Posterior vena cava (tissue), 2 donors: ENCODE measurements at regions of chr10 and their contacts with region 1.

Region 1: GRCh38 chr10:96089670-96090462 is 40.2 kb upstream of the ZNF518A start:
- DNase-seq: peak; percentile 98

Region 2: DNA sequence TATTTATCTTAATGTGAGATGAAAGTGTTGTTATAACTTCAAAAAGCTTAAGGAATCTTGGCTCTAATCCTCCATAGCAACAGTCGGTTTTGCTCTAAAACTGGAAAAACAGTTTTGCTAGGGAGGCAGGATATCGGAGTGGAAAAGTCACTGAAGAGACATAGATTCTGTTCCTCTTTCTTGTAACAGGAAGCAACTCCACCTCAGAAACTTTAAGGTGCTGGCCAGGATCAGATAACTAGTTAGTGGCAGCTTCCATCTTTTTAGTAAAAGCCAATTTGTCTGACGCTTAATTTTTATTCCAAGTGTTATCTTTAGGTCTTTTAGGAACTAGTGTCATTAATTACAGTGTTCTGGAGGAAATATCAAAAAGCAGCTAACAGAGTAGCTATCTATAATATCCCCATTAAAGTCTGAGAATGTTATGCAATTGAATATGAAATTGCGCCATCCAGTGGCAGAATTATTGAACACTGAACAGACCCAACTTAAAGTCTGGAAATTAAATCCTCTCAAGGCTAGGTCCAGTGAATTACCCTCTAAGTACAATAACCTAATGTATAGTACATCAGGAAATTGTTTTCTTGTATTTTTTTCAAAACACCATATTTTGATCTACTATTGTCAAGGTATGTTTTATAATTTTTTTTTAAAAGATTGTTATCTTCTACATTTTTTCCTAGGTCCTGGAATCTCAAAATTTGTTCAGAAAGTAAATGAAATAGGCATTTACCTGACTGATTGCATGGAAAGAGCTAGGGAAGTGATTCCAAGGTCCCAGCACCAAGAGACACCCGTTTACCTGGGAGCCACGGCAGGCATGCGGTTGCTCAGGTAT is 248.0 kb before region 1 on chr10:
- intact Hi-C with region 1: loop called in 1 of 2 experiments (anchors 5 kb)
- DNase-seq: no peak

Region 3: DNA sequence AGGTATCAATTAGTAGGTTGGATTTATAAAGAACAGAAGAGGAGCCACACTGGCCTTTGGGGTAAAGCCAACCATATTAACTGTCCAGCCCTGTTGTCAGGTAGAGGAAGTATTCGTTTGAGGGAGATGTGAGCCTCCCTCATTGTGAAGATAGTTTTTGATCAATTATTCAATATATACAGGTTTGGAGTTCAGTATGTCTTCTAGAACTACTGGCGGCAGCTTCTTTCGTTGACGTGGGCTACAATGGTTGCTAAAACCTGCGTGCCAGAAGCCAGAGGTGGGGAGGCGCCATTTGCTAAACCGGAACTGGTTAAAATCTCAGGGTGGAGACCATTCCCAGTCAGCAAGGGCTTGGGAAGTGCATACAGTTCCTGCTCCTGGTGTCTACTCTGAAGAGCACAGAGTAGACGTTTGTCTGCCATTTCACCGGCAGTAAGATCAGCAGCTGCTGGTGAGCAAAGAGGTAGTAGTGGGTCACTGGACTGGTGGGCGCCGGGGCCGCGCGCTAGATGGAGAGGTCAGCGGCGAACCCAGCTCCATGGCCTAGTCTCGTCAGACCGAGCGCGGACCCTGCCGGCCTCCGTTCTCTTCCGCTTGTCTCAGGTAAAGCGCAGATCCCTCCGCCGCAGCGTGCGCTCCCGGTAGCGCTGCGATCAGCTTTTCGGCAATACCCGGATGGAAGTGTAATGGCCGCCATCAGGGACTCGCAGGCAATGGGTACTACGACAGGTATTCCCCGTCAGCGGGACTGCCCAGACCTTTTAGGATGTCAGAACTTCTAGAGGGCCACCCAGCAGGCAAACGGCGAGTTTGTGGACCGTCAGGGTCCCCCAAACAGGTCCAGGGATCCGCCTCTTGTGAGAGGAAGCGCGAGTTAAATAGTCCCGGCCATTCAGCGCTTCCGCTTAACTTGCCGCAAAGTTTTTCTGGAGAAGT is 39.8 kb after region 1 on chr10 and contains the start of gene ZNF518A:
- intact Hi-C with region 1: loop called in 1 of 2 experiments (anchors 1 kb)
- DNase-seq: peak; percentile 98
- total RNA-seq, gene ZNF518A: 20.0 to 23.1 TPM